Head of caudate nucleus (tissue), 42 donors: ENCODE measurements at regions of chr10 and their contacts with region 1.

Region 1: GRCh38 chr10:62244780-62245467 is 23.7 kb downstream of the RTKN2 start:
- DNase-seq: peak in 33 of 42 donors; percentile 16 to 85 (median 61)

Region 2: DNA sequence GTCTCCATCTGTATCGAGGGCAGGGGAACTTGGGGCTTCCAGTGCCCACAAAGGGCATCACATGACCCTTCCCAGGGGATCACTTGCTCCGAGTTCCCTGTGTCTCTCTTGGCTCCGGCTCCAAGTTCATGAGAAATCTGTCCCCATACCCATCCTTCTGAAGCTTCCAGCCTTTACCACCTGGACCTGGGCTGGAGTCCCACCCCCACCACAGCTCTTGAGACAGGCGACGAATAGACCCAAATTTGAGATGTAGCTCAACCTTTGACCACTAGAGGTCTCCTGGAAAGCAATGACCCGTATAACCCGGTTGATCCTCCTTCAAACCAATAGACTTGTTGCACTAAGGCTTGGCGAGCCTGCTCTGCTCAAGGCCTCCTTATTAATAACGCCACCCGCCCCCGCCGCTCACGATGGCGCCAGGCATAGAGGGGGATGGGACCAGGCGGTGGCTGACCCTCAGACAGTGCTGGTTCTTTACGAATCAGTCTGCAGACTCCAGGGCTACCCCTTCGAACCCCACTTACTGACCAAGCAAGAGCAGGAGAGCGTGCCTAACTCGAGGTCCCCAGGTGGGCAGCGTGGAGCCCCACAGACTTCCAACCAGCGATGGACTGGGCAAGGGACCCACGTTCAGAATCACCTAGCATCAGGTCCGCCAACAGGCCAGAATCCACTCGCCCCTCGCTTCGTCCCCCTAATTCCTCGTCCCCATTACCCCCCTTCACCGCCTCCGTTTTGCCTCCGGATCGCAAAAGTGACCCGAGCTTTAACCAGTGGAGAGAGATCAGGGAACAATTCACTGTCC is 347.9 kb before region 1 on chr10:
- intact Hi-C with region 1: loop called (anchors 10 kb)
- DNase-seq: peak; percentile 12 to 83 (median 56)

Region 3: DNA sequence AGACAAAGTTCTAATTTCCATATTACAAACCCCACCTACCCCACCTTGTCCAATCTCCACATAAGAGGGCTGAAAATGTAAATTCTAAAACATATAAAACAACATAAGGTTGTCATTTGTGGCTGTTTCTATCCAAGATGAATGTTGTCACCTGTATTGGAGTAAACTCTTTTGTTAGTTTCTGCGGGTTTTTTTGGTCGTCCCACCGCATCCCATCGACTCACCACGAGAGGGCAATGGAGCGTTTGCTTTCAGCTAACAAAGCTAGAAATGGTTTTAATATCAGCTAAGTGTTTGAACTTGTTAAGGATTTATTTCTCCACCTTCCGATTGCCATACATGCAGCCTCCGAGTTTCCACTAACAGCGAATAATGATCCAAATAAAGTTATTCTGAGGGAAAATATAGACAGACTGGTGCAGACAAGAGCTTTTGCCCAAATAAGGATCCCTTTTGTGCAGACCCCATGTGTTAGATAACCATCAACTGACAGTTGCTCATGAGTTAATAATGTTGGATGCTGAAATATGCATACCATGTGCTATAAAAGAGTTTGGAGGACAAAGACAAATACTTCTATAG is 206.2 kb before region 1 on chr10:
- intact Hi-C with region 1: loop called (anchors 5 kb)
- DNase-seq: peak; percentile 57 to 91 (median 78)